Left cardiac atrium (tissue), 4 donors: ENCODE measurements at regions of chr11 and their contacts with region 1.

Region 1: DNA sequence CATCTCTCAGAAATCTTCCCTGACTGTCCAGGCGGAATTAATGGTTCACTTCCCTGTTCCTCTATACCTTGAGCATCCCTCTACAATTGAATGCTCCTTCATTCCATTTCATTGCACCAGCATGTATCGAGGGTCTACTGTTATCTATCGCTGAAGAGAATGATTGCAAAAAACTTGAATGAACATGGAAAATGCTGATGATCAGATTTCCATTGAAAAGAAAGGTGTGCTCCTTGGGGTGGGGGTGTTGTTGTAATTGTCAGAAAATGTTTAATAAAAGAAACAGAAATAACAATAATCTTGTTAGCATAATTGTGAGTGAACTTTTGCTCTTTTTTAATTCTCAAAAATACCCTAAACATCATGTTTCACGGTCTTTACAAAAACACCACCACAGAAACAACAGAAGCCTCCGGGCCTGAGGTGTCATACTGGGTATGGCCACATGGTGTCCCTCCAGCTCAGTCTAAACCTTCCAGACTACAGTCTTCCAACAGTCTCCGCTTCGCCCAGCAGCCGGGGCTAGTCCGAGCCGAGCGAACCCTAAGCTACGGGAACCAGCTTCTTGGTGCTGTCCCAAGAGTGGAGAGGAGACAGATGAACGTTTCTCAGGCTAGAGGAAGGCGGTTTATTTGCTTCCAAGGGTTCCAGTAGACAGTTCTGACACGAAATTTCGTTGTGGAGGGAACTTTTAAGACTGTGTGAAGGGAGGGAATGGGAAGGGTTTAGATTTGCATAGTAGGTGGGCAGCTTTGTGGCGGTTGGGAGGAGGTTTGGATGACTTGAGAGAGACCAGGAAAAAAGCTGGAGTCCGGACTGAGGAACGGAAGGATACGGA is 75.8 kb upstream of the ZBED5 start:
- DNase-seq: peak; percentile 92
- ATAC-seq: peak; percentile 82 to 85

Region 2: DNA sequence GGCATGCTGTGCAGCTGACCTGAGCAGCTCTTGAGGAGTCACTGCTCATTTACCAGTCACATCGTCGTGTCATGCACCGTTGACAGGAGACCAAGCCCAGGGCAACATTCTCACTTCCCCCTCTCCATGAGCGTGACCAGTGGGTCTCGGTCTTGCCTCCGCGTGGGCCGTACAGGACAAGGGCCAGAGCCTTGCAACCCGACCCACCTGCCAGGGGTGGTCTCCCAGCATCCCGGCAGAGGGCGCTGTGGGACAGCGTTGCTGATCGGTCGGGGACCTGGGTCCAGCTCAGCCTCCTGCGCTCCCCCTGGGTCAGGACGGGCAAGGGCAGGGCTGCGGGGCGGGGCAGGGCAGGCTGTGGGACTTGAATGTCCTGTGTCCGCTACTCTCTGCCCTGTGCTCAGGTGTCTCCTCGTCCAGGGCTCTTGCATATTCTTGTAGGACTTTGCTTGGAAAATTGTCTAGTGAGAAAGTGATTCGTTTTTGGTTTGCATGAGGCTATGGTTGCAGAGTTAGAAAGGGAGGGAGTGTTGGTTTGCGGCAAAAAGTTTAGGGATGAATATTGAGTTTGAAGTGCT is 141.2 kb before region 1 on chr11:
- intact Hi-C with region 1: loop called in 1 of 2 experiments (anchors 5 kb)
- DNase-seq: peak; percentile 91
- ATAC-seq: peak; percentile 92 to 98

Region 3: GRCh38 chr11:10857709-10858438 is 75.8 kb before region 1 on chr11 and contains the start of gene ZBED5:
- intact Hi-C with region 1: loop called in 1 of 2 experiments (anchors 5 kb)
- DNase-seq: peak; percentile 98
- ATAC-seq: peak; percentile 97 to 98
- total RNA-seq, gene ZBED5: 36.6 to 39.9 TPM

Region 4: GRCh38 chr11:11010624-11011127 is 77.0 kb after region 1 on chr11:
- intact Hi-C with region 1: loop called in 1 of 2 experiments (anchors 2 kb)
- DNase-seq: peak; percentile 39
- ATAC-seq: peak; percentile 82 to 89

Region 5: DNA sequence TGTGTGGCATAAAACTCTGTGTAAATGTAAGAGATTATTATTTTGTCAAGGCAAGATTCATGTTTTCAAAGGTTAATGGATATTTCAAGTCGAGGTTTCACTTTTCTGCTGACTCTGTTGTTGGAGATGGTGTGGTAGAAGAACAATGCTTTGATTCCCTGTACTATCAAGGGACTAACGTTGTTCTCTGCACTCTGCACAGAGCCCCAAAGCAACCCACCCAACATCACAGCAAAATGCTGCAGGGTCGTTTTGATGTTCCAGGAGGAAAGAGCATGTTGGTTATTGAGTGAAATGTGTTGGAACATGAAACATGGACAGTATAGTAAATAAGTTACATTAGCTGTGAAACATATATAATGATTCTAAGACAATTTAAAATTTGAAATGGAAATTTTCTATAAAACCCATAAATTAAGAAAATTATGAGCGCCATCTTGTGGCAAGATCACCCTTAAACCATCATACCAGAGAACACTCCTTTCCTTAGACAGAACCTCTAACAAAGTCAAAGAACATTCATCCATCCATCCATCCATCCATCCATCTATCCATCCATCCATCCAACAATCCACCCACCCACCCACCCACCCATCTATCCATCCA is 88.6 kb after region 1 on chr11:
- intact Hi-C with region 1: loop called (anchors 2 to 5 kb)
- DNase-seq: no peak
- ATAC-seq: no peak

Region 6: DNA sequence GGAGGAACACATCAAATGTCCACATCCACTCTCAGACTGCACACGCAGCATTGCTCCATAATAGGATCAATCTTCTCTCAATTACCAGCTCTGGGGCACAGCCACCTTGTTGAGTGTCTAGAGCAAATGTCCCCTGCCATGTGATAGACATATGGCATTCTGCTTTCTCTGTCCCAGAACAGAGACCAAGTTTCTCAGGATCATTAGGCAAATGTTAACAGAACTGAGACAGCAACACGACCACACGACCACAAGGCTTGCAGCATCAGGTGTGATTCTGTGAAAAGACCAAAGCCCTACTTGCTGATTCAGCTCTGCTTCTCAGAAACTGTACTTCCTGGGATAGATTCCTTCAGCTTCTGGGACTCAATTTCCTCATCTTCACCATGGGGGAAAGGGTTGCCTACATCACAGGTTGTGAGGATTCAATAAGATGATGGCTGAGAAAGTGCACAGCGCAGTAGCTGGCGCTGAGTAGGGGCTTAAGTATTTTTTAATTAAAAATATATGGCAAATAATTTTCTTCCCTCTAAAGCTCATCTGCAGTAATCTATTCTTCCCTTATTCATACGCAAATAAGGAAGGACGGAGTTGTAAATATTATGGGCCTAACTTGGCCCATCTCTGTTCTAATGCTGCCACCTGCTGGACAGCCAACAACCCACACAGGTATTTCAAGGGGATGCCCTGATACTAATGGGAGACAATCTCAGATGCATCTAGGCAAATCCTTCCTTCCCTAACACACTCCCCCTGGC is 853.8 kb after region 1 on chr11:
- intact Hi-C with region 1: loop called in 1 of 2 experiments (anchors 5 kb)
- DNase-seq: peak; percentile 71
- ATAC-seq: peak; percentile 93